ENCODE measurements at regions of chr21 and their contacts with region 1.

Region 1: DNA sequence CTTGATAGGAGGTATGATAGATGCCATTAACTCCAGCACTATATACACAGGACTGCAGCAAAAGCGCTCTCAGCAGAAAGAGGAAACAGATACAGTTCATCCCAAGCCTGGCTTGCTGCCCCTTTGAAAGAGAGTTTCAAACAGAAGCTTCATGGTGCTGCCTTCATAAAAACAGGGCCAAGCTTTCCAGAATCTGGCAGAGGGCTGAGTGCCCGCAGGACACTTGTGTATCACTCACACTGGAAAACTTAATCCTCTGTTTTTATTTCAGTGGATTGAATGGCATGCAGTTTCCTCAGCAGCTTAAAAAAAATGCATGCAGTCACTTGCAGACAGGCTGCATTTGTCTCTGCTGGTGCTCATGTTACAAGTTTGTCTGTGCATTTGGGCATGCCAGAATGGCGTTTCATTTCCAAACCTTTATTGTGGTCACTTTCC is 40.4 kb downstream of the KCNJ15 start:
- DNase-seq: no peak
- H3K4me3 Mint-ChIP-seq: no peak overlapping the region
- H3K27ac Mint-ChIP-seq: no peak overlapping the region
- H3K4me1 Mint-ChIP-seq: peaks cover 74% of the 10 kb centered on the region
- H3K27me3 Mint-ChIP-seq: no peaks in the 10 kb centered on the region

Region 2: GRCh38 chr21:38323721-38324531 is 26.7 kb after region 1 on chr21:
- CTCF ChIA-PET with region 1: no interaction called
- intact Hi-C with region 1: loop called (anchors 2 kb)
- DNase-seq: no peak
- H3K4me3 Mint-ChIP-seq: no peak overlapping the region
- H3K27ac Mint-ChIP-seq: peak overlapping the region; percentile 17
- H3K4me1 Mint-ChIP-seq: peaks cover 36% of the 10 kb centered on the region
- H3K27me3 Mint-ChIP-seq: no peaks in the 10 kb centered on the region